Naive thymus-derived CD8-positive, alpha-beta T cell (primary cell): ENCODE measurements at regions of chrX and their contacts with region 1.

Region 1: GRCh38 chrX:130060122-130061069 is 49.9 kb downstream of the ELF4 start:
- DNase-seq: peak; percentile 57 to 85 (median 77)
- ATAC-seq: peak; percentile 88 to 90
- H3K4me3 Mint-ChIP-seq: peak overlapping the region; percentile 52 to 84 (median 70)
- H3K27ac Mint-ChIP-seq: peak overlapping the region in 3 of 10 donors; percentile 5 to 55 (median 14)
- H3K4me1 Mint-ChIP-seq: peaks cover 0 to 9% (median 4%) of the 10 kb centered on the region in 4 donors
- H3K27me3 Mint-ChIP-seq: no peaks in the 10 kb centered on the region

Region 2: GRCh38 chrX:129925305-129926092 is 134.9 kb before region 1 on chrX:
- POLR2A ChIA-PET with region 1: interaction called, 11 read pairs
- DNase-seq: peak; percentile 38 to 85 (median 64)
- ATAC-seq: peak; percentile 73 to 87
- H3K4me3 Mint-ChIP-seq: no peak overlapping the region
- H3K27ac Mint-ChIP-seq: peak overlapping the region in 1 of 10 donors; percentile 48
- H3K4me1 Mint-ChIP-seq: peaks cover 0 to 6% (median 3%) of the 10 kb centered on the region in 4 donors
- H3K27me3 Mint-ChIP-seq: no peaks in the 10 kb centered on the region